Cardiac septum (tissue), 1 donor: ENCODE measurements at regions of chr3 and their contacts with region 1.

Region 1: DNA sequence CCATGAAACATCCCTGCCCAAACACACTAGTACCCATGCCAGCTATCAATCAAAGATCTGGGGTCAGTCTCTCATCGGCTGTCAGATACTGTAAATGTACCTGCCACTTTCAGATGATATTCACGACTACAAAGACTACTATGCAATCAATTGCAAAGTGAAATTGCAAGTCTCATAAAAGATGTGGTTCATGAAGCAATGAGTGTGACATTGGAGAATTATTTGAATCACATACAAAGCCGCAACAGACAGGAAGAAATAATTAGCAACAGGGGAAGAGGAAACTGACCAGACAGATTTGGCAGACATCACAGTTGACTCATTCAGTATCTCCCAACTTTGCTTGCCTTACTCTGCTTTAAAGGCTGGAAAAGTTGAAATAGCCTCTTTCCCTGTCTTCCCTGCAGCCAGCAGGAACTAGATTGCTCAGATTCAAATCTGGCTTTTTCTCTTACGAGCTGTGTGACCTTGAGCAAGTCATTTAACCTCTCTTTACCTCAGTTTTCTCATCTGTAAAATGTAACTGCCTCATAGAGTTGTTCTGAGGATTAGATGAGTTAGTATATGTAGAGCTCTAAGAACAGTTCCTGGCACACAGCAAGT is 95.7 kb upstream of the C3orf80 start:
- DNase-seq: no peak

Region 2: GRCh38 chr3:160038862-160039562 is 90.5 kb before region 1 on chr3:
- intact Hi-C with region 1: loop called (anchors 10 kb)
- DNase-seq: no peak